GM12878 (cell line): ENCODE measurements at regions of chr5 and their contacts with region 1.

Region 1: GRCh38 chr5:39148983-39149534 is 70.3 kb downstream of the FYB1 start:
- DNase-seq: no peak
- ATAC-seq: peak; percentile 49
- H3K4me3 ChIP-seq: no peak overlapping the region
- H3K27ac ChIP-seq: no peak overlapping the region
- H3K4me1 ChIP-seq: no peaks in the 10 kb centered on the region
- H3K27me3 ChIP-seq: no peaks in the 10 kb centered on the region
- CTCF ChIP-seq: peak in 2 of 3 experiments; percentile 22 to 26; a peak in 2 of 6 replicates
- EP300 ChIP-seq: no peak
- POLR2A ChIP-seq: no peak
- RAD21 ChIP-seq: 0 out of 2 replicates have a peak, but pooled peaks have one; percentile 12

Region 2: GRCh38 chr5:39040875-39041274 is 108.2 kb before region 1 on chr5:
- CTCF ChIA-PET with region 1: no interaction called
- POLR2A ChIA-PET with region 1: no interaction called
- RAD21 ChIA-PET with region 1: no interaction called
- SMC1A ChIA-PET with region 1: no interaction called
- in situ Hi-C with region 1: no loop called
- intact Hi-C with region 1: no loop called
- DNase-seq: no peak
- ATAC-seq: no peak
- H3K4me3 ChIP-seq: no peak overlapping the region
- H3K27ac ChIP-seq: no peak overlapping the region
- H3K4me1 ChIP-seq: no peaks in the 10 kb centered on the region
- H3K27me3 ChIP-seq: no peaks in the 10 kb centered on the region
- CTCF ChIP-seq: no peak
- EP300 ChIP-seq: no peak
- POLR2A ChIP-seq: no peak
- RAD21 ChIP-seq: no peak

Region 3: DNA sequence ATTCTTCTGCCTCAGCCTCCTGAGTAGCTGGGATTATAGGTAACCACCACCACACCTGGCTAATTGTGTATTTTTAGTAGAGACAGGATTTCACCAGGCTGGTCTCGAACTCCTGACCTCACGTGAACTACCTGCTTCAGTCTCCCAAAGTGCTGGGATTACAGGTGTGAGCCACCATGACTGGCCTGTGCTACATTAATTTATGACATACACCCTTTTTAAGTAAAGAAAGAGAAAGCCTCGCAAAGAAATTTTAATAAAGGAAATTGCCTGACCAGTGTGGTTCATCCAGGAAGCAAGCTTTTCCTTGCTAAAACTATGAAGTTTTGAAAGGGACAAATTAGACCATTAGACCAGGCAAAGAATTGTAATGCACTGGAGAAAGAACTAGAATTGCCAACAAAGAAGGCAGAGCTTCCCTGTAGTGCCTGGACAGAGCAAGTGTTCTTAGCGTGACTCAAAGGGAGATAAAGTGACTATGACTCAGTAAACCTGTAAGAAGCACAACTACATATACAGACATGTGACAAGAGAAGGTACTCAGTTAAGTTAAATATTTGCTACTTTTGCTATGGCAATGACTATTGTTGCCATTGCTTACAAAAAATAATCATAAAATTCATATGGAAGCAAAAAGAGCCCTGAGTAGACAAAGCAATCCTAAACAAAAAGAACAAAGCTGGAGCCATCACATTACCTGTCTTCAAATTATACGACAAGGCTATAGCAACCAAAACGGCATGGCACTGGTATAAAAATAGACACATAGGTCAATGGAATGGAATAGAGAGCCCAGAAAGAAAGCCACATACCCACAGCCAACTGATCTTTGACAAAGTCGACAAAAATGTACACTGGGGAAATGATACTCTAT is 15.7 kb after region 1 on chr5:
- CTCF ChIA-PET with region 1: no interaction called
- POLR2A ChIA-PET with region 1: interaction called, 11 read pairs
- RAD21 ChIA-PET with region 1: no interaction called
- SMC1A ChIA-PET with region 1: interaction called, 4 read pairs
- in situ Hi-C with region 1: no loop called
- intact Hi-C with region 1: no loop called
- DNase-seq: no peak
- ATAC-seq: peak; percentile 56
- H3K4me3 ChIP-seq: no peak overlapping the region
- H3K27ac ChIP-seq: no peak overlapping the region
- H3K4me1 ChIP-seq: no peaks in the 10 kb centered on the region
- H3K27me3 ChIP-seq: no peaks in the 10 kb centered on the region
- CTCF ChIP-seq: no peak
- EP300 ChIP-seq: no peak
- POLR2A ChIP-seq: no peak
- RAD21 ChIP-seq: no peak

Region 4: DNA sequence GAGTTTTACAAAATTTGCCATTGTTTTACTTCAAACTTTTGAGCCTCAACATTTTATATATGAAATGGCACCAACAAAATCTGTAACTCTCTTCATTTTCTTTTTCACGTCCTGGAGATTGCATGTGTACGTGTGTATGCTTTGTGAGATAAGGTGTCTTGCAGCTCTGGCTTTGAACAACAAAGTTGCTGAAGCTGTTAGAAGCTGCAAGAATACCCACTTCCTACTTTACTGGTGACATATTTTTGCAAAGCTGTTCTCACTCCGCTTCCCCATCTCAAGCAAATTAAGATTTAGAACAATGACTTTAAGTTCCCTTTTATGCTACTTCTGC is 28.5 kb after region 1 on chr5:
- CTCF ChIA-PET with region 1: interaction called, 5 read pairs
- POLR2A ChIA-PET with region 1: no interaction called
- RAD21 ChIA-PET with region 1: no interaction called
- SMC1A ChIA-PET with region 1: interaction called, 10 read pairs
- in situ Hi-C with region 1: no loop called
- intact Hi-C with region 1: no loop called
- DNase-seq: peak; percentile 21
- ATAC-seq: peak; percentile 81
- H3K4me3 ChIP-seq: no peak overlapping the region; the same call in 1 of the 2 replicates
- H3K27ac ChIP-seq: no peak overlapping the region
- H3K4me1 ChIP-seq: peaks cover 4% of the 10 kb centered on the region
- H3K27me3 ChIP-seq: no peaks in the 10 kb centered on the region
- CTCF ChIP-seq: no peak
- EP300 ChIP-seq: no peak
- POLR2A ChIP-seq: no peak
- RAD21 ChIP-seq: no peak